ENCODE measurements at regions of chr19 and their contacts with region 1.

Region 1: DNA sequence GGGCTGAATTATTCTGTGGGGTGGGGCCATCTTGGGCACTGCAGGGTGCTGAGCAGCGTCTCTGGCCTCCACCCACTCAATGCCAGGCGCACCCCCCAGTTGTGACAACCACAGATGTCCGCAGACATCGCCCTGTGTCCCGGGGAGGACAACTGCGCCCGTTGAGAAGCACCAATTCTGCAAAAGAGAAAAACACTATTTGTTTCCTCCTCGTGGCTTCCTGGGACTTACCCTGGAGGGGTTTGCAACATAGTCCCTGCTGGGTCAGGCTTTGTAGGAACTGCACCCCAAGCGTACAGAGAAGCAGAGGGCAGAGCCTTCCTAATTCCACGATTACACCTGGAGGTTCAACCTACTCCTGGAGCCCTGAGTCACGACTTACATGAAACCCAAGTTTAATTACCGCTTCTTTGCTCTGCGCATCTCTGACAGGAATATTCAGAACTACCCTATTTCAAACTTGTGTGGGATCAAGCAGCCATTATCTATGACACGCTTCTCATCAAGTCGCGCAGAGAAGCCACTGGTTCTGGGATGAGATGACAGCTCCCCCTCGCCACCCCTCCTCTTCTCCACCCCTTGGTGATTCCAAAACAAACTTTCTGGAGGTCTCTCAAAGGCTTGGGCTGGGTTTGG is 11.1 kb upstream of the SLC39A3 start:
- DNase-seq: no peak
- ATAC-seq: no peak
- H3K4me3 Mint-ChIP-seq: no peak overlapping the region
- H3K27ac Mint-ChIP-seq: no peak overlapping the region
- H3K4me1 Mint-ChIP-seq: peaks cover 12% of the 10 kb centered on the region
- H3K27me3 Mint-ChIP-seq: no peaks in the 10 kb centered on the region
- CTCF ChIP-seq: no peak

Region 2: GRCh38 chr19:2648528-2648937 is 102.4 kb before region 1 on chr19:
- CTCF ChIA-PET with region 1: interaction called, 161 read pairs
- POLR2A ChIA-PET with region 1: interaction called, 22 read pairs
- intact Hi-C with region 1: loop called (anchors 1 kb)
- DNase-seq: peak; percentile 75
- ATAC-seq: peak; percentile 87
- H3K4me3 Mint-ChIP-seq: no peak overlapping the region
- H3K27ac Mint-ChIP-seq: peak overlapping the region; percentile 35
- H3K4me1 Mint-ChIP-seq: peaks cover 43% of the 10 kb centered on the region
- H3K27me3 Mint-ChIP-seq: no peaks in the 10 kb centered on the region
- CTCF ChIP-seq: no peak